Right ventricle myocardium superior (tissue), 1 donor: ENCODE measurements at regions of chr10 and their contacts with region 1.

Region 1: GRCh38 chr10:110547139-110547761 is 20.2 kb upstream of the SMC3 start:
- DNase-seq: no peak
- ATAC-seq: peak; percentile 74

Region 2: GRCh38 chr10:110311357-110311949 is 235.8 kb before region 1 on chr10:
- intact Hi-C with region 1: loop called (anchors 5 kb)
- DNase-seq: no peak
- ATAC-seq: peak; percentile 81